Activated naive CD4-positive, alpha-beta T cell treated with anti-CD3 and anti-CD28 coated beads, Interleukin-2, amount 10 ng/mL, durations not matched to agents 7 days and 5 days (primary cell): ENCODE measurements at regions of chr3 and their contacts with region 1.

Region 1: GRCh38 chr3:48151058-48151806 is 37.0 kb downstream of the CDC25A start:
- DNase-seq: peak; percentile 76
- H3K4me3 Mint-ChIP-seq: no peak overlapping the region
- H3K27ac Mint-ChIP-seq: no peak overlapping the region
- H3K4me1 Mint-ChIP-seq: no peaks in the 10 kb centered on the region
- H3K27me3 Mint-ChIP-seq: no peaks in the 10 kb centered on the region

Region 2: GRCh38 chr3:47522082-47522987 is 628.9 kb before region 1 on chr3:
- CTCF ChIA-PET with region 1: interaction called, 14 read pairs
- DNase-seq: peak; percentile 87
- H3K4me3 Mint-ChIP-seq: no peak overlapping the region
- H3K27ac Mint-ChIP-seq: no peak overlapping the region
- H3K4me1 Mint-ChIP-seq: peaks cover 11% of the 10 kb centered on the region
- H3K27me3 Mint-ChIP-seq: peaks cover 26% of the 10 kb centered on the region

Region 3: GRCh38 chr3:47824541-47825473 is 326.4 kb before region 1 on chr3:
- CTCF ChIA-PET with region 1: interaction called, 16 read pairs
- DNase-seq: peak; percentile 80
- H3K4me3 Mint-ChIP-seq: peak overlapping the region; percentile 88
- H3K27ac Mint-ChIP-seq: peak overlapping the region; percentile 84
- H3K4me1 Mint-ChIP-seq: peaks cover 41% of the 10 kb centered on the region
- H3K27me3 Mint-ChIP-seq: no peaks in the 10 kb centered on the region

Region 4: GRCh38 chr3:47836986-47837385 is 314.2 kb before region 1 on chr3:
- CTCF ChIA-PET with region 1: interaction called, 25 read pairs
- DNase-seq: no peak
- H3K4me3 Mint-ChIP-seq: no peak overlapping the region
- H3K27ac Mint-ChIP-seq: no peak overlapping the region
- H3K4me1 Mint-ChIP-seq: no peaks in the 10 kb centered on the region
- H3K27me3 Mint-ChIP-seq: no peaks in the 10 kb centered on the region

Region 5: GRCh38 chr3:47989981-47990440 is 161.2 kb before region 1 on chr3:
- CTCF ChIA-PET with region 1: interaction called, 12 read pairs
- DNase-seq: peak; percentile 80
- H3K4me3 Mint-ChIP-seq: no peak overlapping the region
- H3K27ac Mint-ChIP-seq: no peak overlapping the region
- H3K4me1 Mint-ChIP-seq: no peaks in the 10 kb centered on the region
- H3K27me3 Mint-ChIP-seq: no peaks in the 10 kb centered on the region

Region 6: DNA sequence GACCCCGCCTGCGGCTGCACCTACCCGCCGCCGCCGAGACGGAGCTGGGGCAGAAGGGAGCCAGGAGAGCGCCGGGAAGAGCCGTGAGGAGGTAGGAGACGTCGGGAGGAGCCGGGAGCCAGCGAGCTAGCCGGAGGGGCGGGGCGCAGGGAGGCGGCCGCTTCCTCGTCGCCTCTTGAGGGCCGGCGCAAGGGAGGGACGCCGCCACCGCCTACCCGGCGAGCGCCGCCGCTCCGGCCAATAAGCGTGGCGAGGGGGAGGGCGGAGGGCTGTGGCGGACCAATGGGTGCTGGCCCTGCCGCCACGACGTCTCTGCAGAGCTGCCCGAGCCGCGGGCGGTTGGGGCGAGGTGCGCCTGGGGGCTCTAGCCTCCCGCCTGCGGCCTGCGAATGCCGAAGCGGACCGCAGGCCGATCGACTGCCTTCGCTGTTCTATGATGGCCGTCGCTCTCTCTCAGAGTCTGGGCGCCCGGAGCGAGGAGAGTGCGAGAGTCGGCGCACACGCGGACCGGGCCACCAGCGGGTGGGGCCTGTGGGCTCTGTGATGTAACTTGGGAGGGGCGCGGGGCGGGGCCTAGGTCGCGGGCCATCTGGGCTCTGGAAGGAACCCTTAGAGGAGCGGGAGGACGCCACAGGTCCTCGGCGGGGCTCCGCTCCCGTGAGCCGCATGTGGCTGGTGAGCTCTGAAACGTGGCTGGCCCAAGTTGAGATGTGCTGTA is 62.3 kb before region 1 on chr3:
- CTCF ChIA-PET with region 1: interaction called, 13 read pairs
- DNase-seq: peak; percentile 96
- H3K4me3 Mint-ChIP-seq: peak overlapping the region; percentile 97
- H3K27ac Mint-ChIP-seq: peak overlapping the region; percentile 98
- H3K4me1 Mint-ChIP-seq: peaks cover 34% of the 10 kb centered on the region
- H3K27me3 Mint-ChIP-seq: peaks cover 22% of the 10 kb centered on the region